A549 (cell line): ENCODE measurements at regions of chr19 and their contacts with region 1.

Region 1: GRCh38 chr19:13060964-13061927 is 41.4 kb downstream of the LYL1 start:
- DNase-seq: peak; percentile 68 to 73
- ATAC-seq: peak; percentile 94 to 97
- H3K4me3 ChIP-seq: peak overlapping the region; percentile 53
- H3K27ac ChIP-seq: peak overlapping the region; percentile 85 to 89
- H3K4me1 ChIP-seq: peaks cover 11% of the 10 kb centered on the region; the same call in 2 of the 3 replicates
- CTCF ChIP-seq: peak; percentile 78
- EP300 ChIP-seq: no peak
- POLR2A ChIP-seq: no peak; the same call in 1 of the 2 replicates
- RAD21 ChIP-seq: peak; percentile 77 to 82

Region 2: GRCh38 chr19:12937808-12938233 is 123.4 kb before region 1 on chr19:
- CTCF ChIA-PET with region 1: no interaction called
- POLR2A ChIA-PET with region 1: no interaction called
- DNase-seq: peak in 1 of 2 experiments; percentile 68
- ATAC-seq: peak; percentile 47 to 52
- H3K4me3 ChIP-seq: peak overlapping the region; percentile 100
- H3K27ac ChIP-seq: peak overlapping the region; percentile 89 to 92
- H3K4me1 ChIP-seq: peaks cover 22% of the 10 kb centered on the region
- CTCF ChIP-seq: no peak
- EP300 ChIP-seq: no peak
- POLR2A ChIP-seq: no peak
- RAD21 ChIP-seq: no peak

Region 3: GRCh38 chr19:12965017-12965811 is 96.0 kb before region 1 on chr19:
- CTCF ChIA-PET with region 1: interaction called, 28 read pairs
- POLR2A ChIA-PET with region 1: no interaction called
- DNase-seq: peak; percentile 53 to 76
- ATAC-seq: peak; percentile 97 to 98
- H3K4me3 ChIP-seq: peak overlapping the region; percentile 53
- H3K27ac ChIP-seq: peak overlapping the region; percentile 91
- H3K4me1 ChIP-seq: peaks cover 11% of the 10 kb centered on the region; the same call in 1 of the 3 replicates
- CTCF ChIP-seq: peak; percentile 67
- EP300 ChIP-seq: no peak
- POLR2A ChIP-seq: no peak
- RAD21 ChIP-seq: peak; percentile 53 to 63

Region 4: GRCh38 chr19:13001166-13001501 is 60.1 kb before region 1 on chr19:
- CTCF ChIA-PET with region 1: interaction called, 18 read pairs
- POLR2A ChIA-PET with region 1: no interaction called
- DNase-seq: no peak
- ATAC-seq: no peak
- H3K4me3 ChIP-seq: no peak overlapping the region
- H3K27ac ChIP-seq: no peak overlapping the region
- H3K4me1 ChIP-seq: no peaks in the 10 kb centered on the region
- CTCF ChIP-seq: no peak
- EP300 ChIP-seq: no peak
- POLR2A ChIP-seq: no peak
- RAD21 ChIP-seq: no peak

Region 5: GRCh38 chr19:13033819-13034611 is 27.2 kb before region 1 on chr19:
- CTCF ChIA-PET with region 1: interaction called, 89 read pairs
- POLR2A ChIA-PET with region 1: no interaction called
- DNase-seq: peak; percentile 42 to 68
- ATAC-seq: peak; percentile 84 to 94; a peak in 5 of 6 replicates
- H3K4me3 ChIP-seq: no peak overlapping the region
- H3K27ac ChIP-seq: no peak overlapping the region
- H3K4me1 ChIP-seq: peaks cover 17% of the 10 kb centered on the region
- CTCF ChIP-seq: peak; percentile 47
- EP300 ChIP-seq: no peak
- POLR2A ChIP-seq: no peak
- RAD21 ChIP-seq: peak; percentile 32 to 52

Region 6: DNA sequence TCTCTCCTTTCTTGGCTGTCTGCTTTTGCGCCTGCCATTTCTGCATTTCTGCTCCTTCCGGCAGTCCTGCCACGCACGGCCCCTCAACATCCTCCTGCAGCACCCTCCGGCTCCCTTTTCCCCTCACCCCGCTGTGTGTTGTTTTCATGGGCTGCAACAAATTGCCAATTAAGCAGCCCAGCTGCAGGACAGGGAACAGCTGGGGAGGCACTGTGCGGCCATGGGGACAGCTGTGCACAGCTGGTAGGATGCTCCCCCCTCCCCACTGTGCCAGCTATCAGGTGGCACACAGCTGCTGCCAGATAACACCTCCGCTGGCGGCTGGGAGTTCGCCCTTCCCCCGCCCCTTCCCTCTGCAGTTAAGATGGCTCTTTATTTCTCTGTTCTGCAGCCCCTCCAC is 16.0 kb after region 1 on chr19:
- CTCF ChIA-PET with region 1: interaction called, 40 read pairs
- POLR2A ChIA-PET with region 1: no interaction called
- DNase-seq: no peak
- ATAC-seq: no peak
- H3K4me3 ChIP-seq: no peak overlapping the region
- H3K27ac ChIP-seq: no peak overlapping the region
- H3K4me1 ChIP-seq: peaks cover 17% of the 10 kb centered on the region
- CTCF ChIP-seq: no peak
- EP300 ChIP-seq: no peak
- POLR2A ChIP-seq: no peak
- RAD21 ChIP-seq: no peak

Region 7: DNA sequence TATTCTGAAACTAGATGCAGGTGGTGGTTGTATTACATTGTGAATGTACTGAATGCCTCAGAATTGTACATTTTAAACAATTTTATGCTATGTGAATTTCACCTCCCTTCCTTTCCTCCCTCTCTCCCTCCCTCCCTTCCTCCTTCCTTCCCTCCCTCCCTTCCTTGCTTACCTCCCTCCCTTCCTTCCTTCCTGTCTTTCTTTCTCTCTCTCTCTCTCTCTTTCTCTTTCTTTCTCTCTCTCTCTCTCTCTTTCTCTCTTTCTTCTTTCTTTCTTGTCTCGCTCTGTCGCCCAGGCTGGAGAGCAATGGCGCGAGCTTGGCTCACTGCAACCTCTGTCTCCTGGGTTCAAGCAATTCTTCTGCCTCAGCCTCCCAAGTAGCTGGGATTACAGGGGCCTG is 126.2 kb after region 1 on chr19:
- CTCF ChIA-PET with region 1: no interaction called
- POLR2A ChIA-PET with region 1: no interaction called
- DNase-seq: no peak
- ATAC-seq: no peak
- H3K4me3 ChIP-seq: no peak overlapping the region
- H3K27ac ChIP-seq: 0 out of 6 replicates have a peak overlapping the region, but pooled peaks of 1 of the 2 experiments have one; percentile 28
- H3K4me1 ChIP-seq: no peaks in the 10 kb centered on the region
- CTCF ChIP-seq: no peak
- EP300 ChIP-seq: no peak
- POLR2A ChIP-seq: no peak
- RAD21 ChIP-seq: no peak

Region 8: GRCh38 chr19:13604902-13605586 is 543.8 kb after region 1 on chr19:
- CTCF ChIA-PET with region 1: no interaction called
- POLR2A ChIA-PET with region 1: no interaction called
- DNase-seq: no peak
- ATAC-seq: no peak
- H3K4me3 ChIP-seq: no peak overlapping the region
- H3K27ac ChIP-seq: no peak overlapping the region
- H3K4me1 ChIP-seq: peaks cover 4% of the 10 kb centered on the region; the same call in 2 of the 3 replicates
- CTCF ChIP-seq: no peak
- EP300 ChIP-seq: no peak
- POLR2A ChIP-seq: no peak
- RAD21 ChIP-seq: no peak